Mammary epithelial cell (primary cell): ENCODE measurements at regions of chr5 and their contacts with region 1.

Region 1: DNA sequence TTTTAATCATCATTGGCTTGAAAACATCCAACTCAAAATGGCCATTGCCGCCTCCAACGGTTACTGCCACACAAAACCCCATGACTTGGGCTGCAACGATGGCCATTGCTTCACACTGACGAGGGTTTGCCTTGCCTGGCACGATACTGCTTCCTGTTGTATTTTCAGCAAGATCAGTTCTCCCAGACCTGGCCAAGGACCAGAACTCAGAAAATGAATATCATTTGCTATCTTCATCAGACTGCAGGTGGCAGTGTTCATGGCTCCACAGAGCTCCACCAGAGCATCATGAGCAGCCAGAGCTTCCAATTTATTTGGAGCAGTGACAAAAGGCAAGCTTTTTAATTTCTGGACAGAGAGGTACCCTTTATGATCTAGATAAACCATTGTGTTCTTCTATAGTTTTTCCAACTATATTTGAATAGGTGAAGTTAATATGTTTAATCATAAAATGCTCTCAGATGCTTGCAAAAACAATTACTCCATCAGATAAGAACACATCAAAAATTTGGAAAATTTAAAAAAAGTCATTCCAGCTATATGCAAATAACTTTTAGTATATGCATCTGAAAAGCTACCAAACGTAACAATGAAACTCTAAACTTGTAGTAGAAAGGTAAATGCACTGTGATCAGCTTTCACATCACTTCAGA is 10.4 kb downstream of the AMACR start:
- DNase-seq: peak; percentile 74
- H3K4me3 ChIP-seq: no peak overlapping the region
- H3K27ac ChIP-seq: no peak overlapping the region
- H3K4me1 ChIP-seq: no peaks in the 10 kb centered on the region
- H3K27me3 ChIP-seq: no peaks in the 10 kb centered on the region
- CTCF ChIP-seq: peak; percentile 57 to 78

Region 2: GRCh38 chr5:33649796-33650482 is 347.5 kb before region 1 on chr5:
- CTCF ChIA-PET with region 1: no interaction called
- dilution Hi-C with region 1: no loop called
- in situ Hi-C with region 1: no loop called
- intact Hi-C with region 1: no loop called
- DNase-seq: peak; percentile 85
- H3K4me3 ChIP-seq: no peak overlapping the region
- H3K27ac ChIP-seq: peak overlapping the region; percentile 37
- H3K4me1 ChIP-seq: peaks cover 20% of the 10 kb centered on the region
- H3K27me3 ChIP-seq: no peaks in the 10 kb centered on the region
- CTCF ChIP-seq: no peak

Region 3: DNA sequence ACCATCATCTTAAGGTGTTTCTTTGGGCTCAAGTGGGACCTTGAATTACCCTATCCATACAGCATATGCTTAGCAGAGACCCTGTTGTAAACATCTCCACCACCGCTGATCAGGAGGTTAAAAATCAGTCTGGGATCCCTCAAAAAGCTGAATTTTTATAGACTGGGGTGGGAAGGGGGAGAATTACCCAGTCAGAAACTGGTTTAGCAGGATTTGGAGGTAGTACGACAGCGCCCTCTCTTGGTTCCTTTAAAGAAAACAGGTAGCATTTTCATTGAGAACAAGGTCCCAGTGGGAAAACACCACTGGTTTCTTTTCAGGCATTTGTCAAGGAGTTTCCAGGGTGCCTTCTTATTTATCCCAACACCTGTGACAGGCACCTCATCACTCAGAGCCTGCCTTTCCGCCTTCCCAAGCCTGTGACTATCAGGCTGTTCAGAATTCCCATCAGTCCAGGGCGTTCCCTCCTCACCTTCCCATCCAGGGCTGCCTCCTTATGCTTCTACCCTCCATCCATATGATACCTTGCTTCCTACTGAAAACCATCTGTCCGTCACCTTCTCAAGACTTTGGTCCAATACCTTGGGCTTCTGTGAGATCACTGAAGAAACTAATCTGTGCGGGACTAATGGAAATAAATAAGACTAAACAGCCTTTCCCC is 454.8 kb after region 1 on chr5:
- CTCF ChIA-PET with region 1: no interaction called
- dilution Hi-C with region 1: no loop called
- in situ Hi-C with region 1: no loop called
- intact Hi-C with region 1: loop called (anchors 1 kb)
- DNase-seq: peak; percentile 22
- H3K4me3 ChIP-seq: no peak overlapping the region
- H3K27ac ChIP-seq: no peak overlapping the region
- H3K4me1 ChIP-seq: no peaks in the 10 kb centered on the region
- H3K27me3 ChIP-seq: no peaks in the 10 kb centered on the region
- CTCF ChIP-seq: peak; percentile 34 to 60

Region 4: DNA sequence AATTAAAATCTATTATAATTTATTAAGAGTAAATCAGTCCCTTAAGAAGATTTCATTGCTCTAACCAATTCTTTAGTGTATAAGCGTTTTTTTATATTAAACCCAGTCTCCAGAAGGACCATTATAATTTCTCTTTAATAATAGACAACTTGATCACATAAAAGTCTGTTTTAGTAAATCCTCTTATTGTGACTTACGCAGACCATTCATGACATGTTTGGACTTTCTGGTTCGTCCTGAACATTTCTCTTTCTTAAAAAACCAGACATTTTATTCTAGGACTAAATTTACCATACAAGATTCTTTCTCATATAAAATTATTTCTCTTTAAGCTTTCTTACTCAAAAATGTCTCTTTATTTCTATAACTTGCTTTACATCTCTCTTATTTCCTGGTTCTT is 462.5 kb after region 1 on chr5:
- CTCF ChIA-PET with region 1: no interaction called
- dilution Hi-C with region 1: no loop called
- in situ Hi-C with region 1: loop called (anchors 5 to 10 kb)
- intact Hi-C with region 1: loop called (anchors 1 kb)
- DNase-seq: no peak
- H3K4me3 ChIP-seq: no peak overlapping the region
- H3K27ac ChIP-seq: no peak overlapping the region
- H3K4me1 ChIP-seq: no peaks in the 10 kb centered on the region
- H3K27me3 ChIP-seq: no peaks in the 10 kb centered on the region
- CTCF ChIP-seq: no peak